HepG2 (cell line): ENCODE measurements at regions of chr2 and their contacts with region 1.

Region 1: GRCh38 chr2:212465456-212465855 is 73.1 kb downstream of the ERBB4 start:
- DNase-seq: no peak
- ATAC-seq: no peak
- H3K4me3 ChIP-seq: no peak overlapping the region
- H3K27ac ChIP-seq: no peak overlapping the region
- H3K4me1 ChIP-seq: no peaks in the 10 kb centered on the region
- H3K27me3 ChIP-seq: no peaks in the 10 kb centered on the region
- CTCF ChIP-seq: no peak
- EP300 ChIP-seq: no peak
- POLR2A ChIP-seq: no peak
- RAD21 ChIP-seq: no peak

Region 2: DNA sequence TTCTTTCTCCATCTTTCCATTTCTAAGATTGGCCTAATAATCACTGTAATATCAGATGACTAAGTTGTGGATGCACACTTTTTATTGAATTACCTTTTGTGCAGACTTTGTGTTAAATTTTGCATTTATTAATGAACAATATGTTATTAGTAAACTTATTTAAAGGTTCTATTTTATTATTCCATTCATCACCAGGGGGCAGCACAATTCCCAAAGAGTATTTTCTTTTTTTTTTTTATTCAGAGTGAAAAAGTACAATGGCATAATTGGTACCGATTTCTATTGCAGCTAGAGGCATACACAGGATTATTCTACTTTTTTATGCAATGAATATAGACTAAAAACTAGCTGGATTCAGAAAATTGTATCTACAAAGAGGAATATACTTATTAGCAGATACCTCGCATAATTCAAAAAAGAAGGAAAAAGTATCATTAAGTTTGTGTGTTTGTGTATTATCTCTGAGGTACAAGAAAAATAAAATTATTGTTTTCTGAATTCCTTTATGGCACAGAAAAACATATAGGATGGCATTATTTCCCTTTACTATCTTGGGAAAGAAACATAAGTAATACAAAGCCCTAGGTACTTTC is 317.4 kb before region 1 on chr2:
- CTCF ChIA-PET with region 1: no interaction called
- POLR2A ChIA-PET with region 1: no interaction called
- in situ Hi-C with region 1: no loop called
- intact Hi-C with region 1: loop called (anchors 2 kb)
- DNase-seq: peak; percentile 12
- ATAC-seq: no peak
- H3K4me3 ChIP-seq: no peak overlapping the region
- H3K27ac ChIP-seq: no peak overlapping the region
- H3K4me1 ChIP-seq: no peaks in the 10 kb centered on the region
- H3K27me3 ChIP-seq: no peaks in the 10 kb centered on the region
- CTCF ChIP-seq: peak; percentile 37
- EP300 ChIP-seq: no peak
- POLR2A ChIP-seq: no peak
- RAD21 ChIP-seq: no peak

Region 3: GRCh38 chr2:212177724-212178123 is 287.7 kb before region 1 on chr2:
- CTCF ChIA-PET with region 1: no interaction called
- POLR2A ChIA-PET with region 1: no interaction called
- in situ Hi-C with region 1: no loop called
- intact Hi-C with region 1: loop called (anchors 1 kb)
- DNase-seq: peak; percentile 3
- ATAC-seq: no peak
- H3K4me3 ChIP-seq: no peak overlapping the region
- H3K27ac ChIP-seq: no peak overlapping the region
- H3K4me1 ChIP-seq: no peaks in the 10 kb centered on the region
- H3K27me3 ChIP-seq: no peaks in the 10 kb centered on the region
- CTCF ChIP-seq: peak; percentile 13; the same call in 1 of the 2 replicates
- EP300 ChIP-seq: no peak
- POLR2A ChIP-seq: no peak
- RAD21 ChIP-seq: no peak

Region 4: DNA sequence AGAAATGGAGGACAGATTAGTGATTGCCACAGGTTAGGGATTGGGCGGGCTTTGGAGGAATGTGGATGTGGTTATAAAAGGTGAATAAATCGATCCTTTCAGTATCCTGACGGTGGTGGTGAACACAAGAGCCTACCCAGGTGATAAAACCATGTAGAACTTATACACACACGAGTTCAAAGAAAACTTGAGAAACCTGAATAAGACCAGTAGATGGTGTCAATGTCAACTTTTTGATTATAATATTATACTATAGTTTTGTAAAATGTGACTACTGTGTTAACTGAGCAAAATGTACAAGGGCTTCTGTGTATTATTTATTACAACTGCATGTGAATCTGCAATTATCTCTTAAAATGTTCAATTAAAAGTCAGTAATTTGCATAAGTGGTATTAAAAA is 63.1 kb before region 1 on chr2:
- CTCF ChIA-PET with region 1: no interaction called
- POLR2A ChIA-PET with region 1: no interaction called
- in situ Hi-C with region 1: no loop called
- intact Hi-C with region 1: loop called (anchors 5 kb)
- DNase-seq: no peak
- ATAC-seq: no peak
- H3K4me3 ChIP-seq: no peak overlapping the region
- H3K27ac ChIP-seq: no peak overlapping the region
- H3K4me1 ChIP-seq: peaks cover 6% of the 10 kb centered on the region
- H3K27me3 ChIP-seq: no peaks in the 10 kb centered on the region
- CTCF ChIP-seq: no peak
- EP300 ChIP-seq: no peak
- POLR2A ChIP-seq: no peak
- RAD21 ChIP-seq: no peak

Region 5: GRCh38 chr2:212441141-212441540 is 24.3 kb before region 1 on chr2:
- CTCF ChIA-PET with region 1: no interaction called
- POLR2A ChIA-PET with region 1: no interaction called
- in situ Hi-C with region 1: no loop called
- intact Hi-C with region 1: no loop called
- DNase-seq: no peak
- ATAC-seq: no peak
- H3K4me3 ChIP-seq: no peak overlapping the region
- H3K27ac ChIP-seq: no peak overlapping the region
- H3K4me1 ChIP-seq: no peaks in the 10 kb centered on the region
- H3K27me3 ChIP-seq: no peaks in the 10 kb centered on the region
- CTCF ChIP-seq: no peak
- EP300 ChIP-seq: no peak
- POLR2A ChIP-seq: no peak
- RAD21 ChIP-seq: no peak

Region 6: DNA sequence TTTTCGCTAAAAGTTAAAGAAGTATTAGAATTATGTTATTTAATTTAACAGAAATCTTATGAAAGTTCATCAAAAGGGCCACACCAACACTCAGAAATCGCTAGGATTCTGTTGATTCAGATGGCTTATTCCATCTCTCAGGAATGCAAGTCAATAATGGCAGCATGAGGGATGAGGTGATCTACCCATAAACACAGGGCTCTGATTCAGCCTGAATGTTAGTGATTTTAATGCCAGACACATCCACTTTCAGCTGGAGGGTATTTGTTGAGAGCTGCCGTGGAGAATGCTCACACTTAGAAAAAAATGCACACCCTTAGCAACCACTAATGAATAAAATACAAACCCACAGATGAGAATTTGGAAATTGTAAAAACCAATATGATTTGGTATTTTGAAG is 246.4 kb after region 1 on chr2:
- CTCF ChIA-PET with region 1: no interaction called
- POLR2A ChIA-PET with region 1: no interaction called
- in situ Hi-C with region 1: no loop called
- intact Hi-C with region 1: no loop called
- DNase-seq: no peak
- ATAC-seq: no peak
- H3K4me3 ChIP-seq: no peak overlapping the region
- H3K27ac ChIP-seq: no peak overlapping the region
- H3K4me1 ChIP-seq: no peaks in the 10 kb centered on the region
- H3K27me3 ChIP-seq: no peaks in the 10 kb centered on the region
- CTCF ChIP-seq: no peak
- EP300 ChIP-seq: no peak
- POLR2A ChIP-seq: no peak
- RAD21 ChIP-seq: no peak